ENCODE measurements at regions of chr2 and their contacts with region 1.

Region 1: DNA sequence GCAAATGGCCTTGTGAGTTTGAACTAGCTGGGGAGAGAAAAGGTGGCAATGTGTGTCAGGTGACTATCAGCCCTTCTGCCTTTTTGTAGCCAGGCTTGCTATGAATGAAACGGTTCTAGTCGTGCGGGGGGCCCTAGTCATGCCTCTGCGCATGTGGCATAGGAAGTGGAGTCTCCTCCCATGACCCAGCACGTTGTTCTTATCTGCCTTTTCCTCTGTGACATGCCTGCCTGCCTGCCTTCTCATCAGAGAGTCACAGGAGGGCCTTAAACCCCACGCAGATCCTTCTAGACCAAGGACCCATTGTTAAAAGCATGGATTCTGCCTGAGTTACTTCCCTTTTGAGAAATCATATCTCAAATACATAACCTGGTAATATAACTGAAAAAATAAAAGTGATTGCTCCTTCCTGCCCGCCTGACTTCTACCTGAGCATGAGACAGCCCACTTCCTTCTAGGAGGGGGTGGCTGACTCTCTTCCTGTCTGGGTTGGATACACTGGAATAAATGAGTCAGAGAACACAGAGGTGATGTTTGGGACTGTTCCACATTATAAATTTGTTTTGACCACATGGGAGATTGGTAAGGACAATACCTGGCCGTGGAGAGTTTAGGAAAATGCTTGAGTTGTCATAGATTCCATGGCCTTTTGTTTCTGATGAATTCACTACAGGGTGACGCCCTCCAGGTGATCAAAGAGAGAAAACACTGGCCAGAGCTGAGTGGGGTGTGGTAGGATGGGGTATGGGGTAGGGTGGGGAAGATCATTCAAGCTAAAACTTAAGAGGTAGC is 49.8 kb downstream of the FBLN7 start:
- DNase-seq: peak; percentile 84 to 94 (median 87)
- H3K4me3 ChIP-seq: peak overlapping the region in 1 of 2 donors; percentile 30
- H3K4me3 Mint-ChIP-seq: peak overlapping the region; percentile 51 to 86 (median 74)
- H3K27ac ChIP-seq: peak overlapping the region; percentile 80
- H3K27ac Mint-ChIP-seq: peak overlapping the region; percentile 93 to 100 (median 99)
- H3K4me1 ChIP-seq: peaks cover 91% of the 10 kb centered on the region
- H3K4me1 Mint-ChIP-seq: peaks cover 65 to 92% (median 78%) of the 10 kb centered on the region in 4 donors
- H3K27me3 ChIP-seq: no peaks in the 10 kb centered on the region
- H3K27me3 Mint-ChIP-seq: peaks cover 0 to 1% of the 10 kb centered on the region in 2 donors

Region 2: GRCh38 chr2:111120253-111121027 is 1067.6 kb before region 1 on chr2 and contains the start of gene BCL2L11:
- CTCF ChIA-PET with region 1: no interaction called
- POLR2A ChIA-PET with region 1: no interaction called
- intact Hi-C with region 1: loop called (anchors 10 kb)
- DNase-seq: peak; percentile 85 to 91 (median 87)
- H3K4me3 ChIP-seq: peak within 1 kb of the TSS; percentile 78 to 83
- H3K4me3 Mint-ChIP-seq: peak within 1 kb of the TSS; percentile 88 to 97 (median 94)
- H3K27ac ChIP-seq: peak within 1 kb of the TSS; percentile 32
- H3K27ac Mint-ChIP-seq: peak within 1 kb of the TSS; percentile 82 to 95 (median 89)
- H3K4me1 ChIP-seq: peaks cover 47% of the 10 kb centered on the region
- H3K4me1 Mint-ChIP-seq: peaks cover 21 to 59% (median 37%) of the 10 kb centered on the region in 4 donors
- H3K27me3 ChIP-seq: peaks cover 36% of the 10 kb centered on the region
- H3K27me3 Mint-ChIP-seq: peaks cover 19 to 35% of the 10 kb centered on the region in 2 donors
- total RNA-seq, gene BCL2L11: 33.4 to 34.1 TPM

Region 3: GRCh38 chr2:112121682-112122254 is 66.2 kb before region 1 on chr2:
- CTCF ChIA-PET with region 1: interaction called, 10 read pairs
- POLR2A ChIA-PET with region 1: interaction called, 5 read pairs
- intact Hi-C with region 1: loop called (anchors 5 kb)
- DNase-seq: peak; percentile 46 to 58 (median 52)
- H3K4me3 ChIP-seq: no peak overlapping the region
- H3K4me3 Mint-ChIP-seq: no peak overlapping the region
- H3K27ac ChIP-seq: no peak overlapping the region
- H3K27ac Mint-ChIP-seq: peak overlapping the region in 3 of 7 donors; percentile 16 to 68 (median 38)
- H3K4me1 ChIP-seq: no peaks in the 10 kb centered on the region
- H3K4me1 Mint-ChIP-seq: no peaks in the 10 kb centered on the region
- H3K27me3 ChIP-seq: no peaks in the 10 kb centered on the region
- H3K27me3 Mint-ChIP-seq: no peaks in the 10 kb centered on the region

Region 4: DNA sequence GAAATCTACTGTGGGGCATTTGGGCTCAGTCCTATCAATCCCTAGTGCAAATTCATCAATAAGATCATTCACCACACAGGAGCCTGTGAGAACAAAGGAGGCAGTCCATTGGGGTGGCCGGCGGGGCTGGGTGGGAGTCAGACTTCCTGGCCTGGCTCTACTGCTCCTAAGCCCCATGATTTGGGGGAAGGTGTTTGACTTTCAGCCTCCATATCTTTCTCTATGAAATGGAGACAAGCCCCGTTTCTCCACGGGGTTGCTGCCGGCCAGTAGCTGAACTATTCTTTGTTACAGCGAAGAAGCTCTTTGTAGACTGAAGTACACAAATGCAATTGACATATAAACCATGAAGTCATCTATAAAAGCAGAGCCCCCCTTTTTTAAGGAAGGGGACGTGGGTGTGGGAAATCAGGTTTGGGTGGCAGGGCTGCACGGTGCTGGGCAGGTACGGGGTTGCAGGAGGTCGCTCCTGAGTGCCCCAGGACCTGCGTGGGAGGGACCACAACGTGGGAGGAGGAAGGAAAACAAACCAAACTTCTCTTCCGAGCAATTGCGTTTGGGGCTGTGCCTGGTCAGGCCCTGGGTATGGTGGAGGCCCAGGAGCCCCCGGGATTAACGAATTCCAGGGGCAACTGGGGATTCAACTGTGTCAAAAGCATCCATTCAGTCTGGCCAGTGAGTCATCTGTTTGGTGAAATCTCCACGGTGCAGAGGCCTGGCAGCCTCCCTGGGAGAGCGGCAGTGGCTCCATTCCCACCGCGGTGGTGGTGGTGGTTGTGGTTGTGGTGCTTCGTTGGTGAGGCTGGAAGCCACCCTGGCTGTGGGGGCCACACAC is 31.6 kb before region 1 on chr2:
- CTCF ChIA-PET with region 1: no interaction called
- POLR2A ChIA-PET with region 1: interaction called, 41 read pairs
- intact Hi-C with region 1: loop called (anchors 1 kb)
- DNase-seq: peak in 2 of 5 donors; percentile 21 to 51
- H3K4me3 ChIP-seq: peak overlapping the region; percentile 23 to 53
- H3K4me3 Mint-ChIP-seq: peak overlapping the region; percentile 78 to 89 (median 82)
- H3K27ac ChIP-seq: peak overlapping the region; percentile 16
- H3K27ac Mint-ChIP-seq: peak overlapping the region; percentile 82 to 95 (median 89)
- H3K4me1 ChIP-seq: peaks cover 28% of the 10 kb centered on the region
- H3K4me1 Mint-ChIP-seq: peaks cover 23 to 37% (median 31%) of the 10 kb centered on the region in 4 donors
- H3K27me3 ChIP-seq: no peaks in the 10 kb centered on the region
- H3K27me3 Mint-ChIP-seq: no peaks in the 10 kb centered on the region

Region 5: GRCh38 chr2:112230371-112230770 is 42.4 kb after region 1 on chr2:
- CTCF ChIA-PET with region 1: interaction called, 4 read pairs
- POLR2A ChIA-PET with region 1: interaction called, 3 read pairs
- intact Hi-C with region 1: loop called (anchors 5 kb)
- DNase-seq: no peak
- H3K4me3 ChIP-seq: no peak overlapping the region
- H3K4me3 Mint-ChIP-seq: no peak overlapping the region
- H3K27ac ChIP-seq: no peak overlapping the region
- H3K27ac Mint-ChIP-seq: no peak overlapping the region
- H3K4me1 ChIP-seq: no peaks in the 10 kb centered on the region
- H3K4me1 Mint-ChIP-seq: peaks cover 0 to 5% (median 3%) of the 10 kb centered on the region in 4 donors
- H3K27me3 ChIP-seq: no peaks in the 10 kb centered on the region
- H3K27me3 Mint-ChIP-seq: no peaks in the 10 kb centered on the region

Region 6: DNA sequence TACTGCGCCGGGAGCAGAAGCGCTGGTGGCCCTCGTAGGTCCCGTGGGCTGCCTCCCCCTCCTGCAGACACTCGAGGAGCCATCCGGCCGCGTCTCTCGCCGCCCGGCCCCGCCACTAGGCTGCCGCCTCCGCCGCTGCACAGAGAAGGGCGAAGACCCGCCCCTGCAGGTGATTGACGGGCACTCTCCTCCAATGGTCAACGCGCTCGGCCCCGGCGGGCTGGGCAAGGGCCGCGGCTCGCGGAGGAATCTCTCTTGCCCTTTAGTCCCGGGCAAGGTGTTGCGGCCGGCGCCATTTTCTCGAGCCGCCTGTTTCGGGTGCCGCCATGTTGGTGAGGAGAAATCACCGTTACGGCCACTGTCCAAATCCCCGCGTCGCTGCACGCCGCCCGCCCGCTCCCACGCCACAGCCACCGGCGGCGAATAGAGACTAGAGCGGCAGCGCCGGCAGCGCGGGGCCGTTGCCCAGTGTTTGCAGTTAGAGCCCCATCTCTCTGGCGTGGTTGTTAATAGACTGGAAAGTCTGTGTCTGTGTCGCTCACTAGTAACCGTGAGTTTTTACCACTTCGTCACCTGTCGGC is 87.4 kb after region 1 on chr2 and contains the start of gene ZC3H6:
- CTCF ChIA-PET with region 1: interaction called, 3 read pairs
- POLR2A ChIA-PET with region 1: interaction called, 6 read pairs
- intact Hi-C with region 1: loop called (anchors 1 kb)
- DNase-seq: peak; percentile 97 to 100 (median 99)
- H3K4me3 ChIP-seq: peak within 1 kb of the TSS; percentile 90 to 97
- H3K4me3 Mint-ChIP-seq: peak within 1 kb of the TSS; percentile 91 to 97 (median 94)
- H3K27ac ChIP-seq: peak within 1 kb of the TSS; percentile 100
- H3K27ac Mint-ChIP-seq: peak within 1 kb of the TSS; percentile 97 to 100 (median 99)
- H3K4me1 ChIP-seq: peaks cover 28% of the 10 kb centered on the region
- H3K4me1 Mint-ChIP-seq: peaks cover 11 to 46% (median 19%) of the 10 kb centered on the region in 4 donors
- H3K27me3 ChIP-seq: no peaks in the 10 kb centered on the region
- H3K27me3 Mint-ChIP-seq: no peaks in the 10 kb centered on the region
- total RNA-seq, gene ZC3H6: 36.8 to 43.2 TPM

Region 7: DNA sequence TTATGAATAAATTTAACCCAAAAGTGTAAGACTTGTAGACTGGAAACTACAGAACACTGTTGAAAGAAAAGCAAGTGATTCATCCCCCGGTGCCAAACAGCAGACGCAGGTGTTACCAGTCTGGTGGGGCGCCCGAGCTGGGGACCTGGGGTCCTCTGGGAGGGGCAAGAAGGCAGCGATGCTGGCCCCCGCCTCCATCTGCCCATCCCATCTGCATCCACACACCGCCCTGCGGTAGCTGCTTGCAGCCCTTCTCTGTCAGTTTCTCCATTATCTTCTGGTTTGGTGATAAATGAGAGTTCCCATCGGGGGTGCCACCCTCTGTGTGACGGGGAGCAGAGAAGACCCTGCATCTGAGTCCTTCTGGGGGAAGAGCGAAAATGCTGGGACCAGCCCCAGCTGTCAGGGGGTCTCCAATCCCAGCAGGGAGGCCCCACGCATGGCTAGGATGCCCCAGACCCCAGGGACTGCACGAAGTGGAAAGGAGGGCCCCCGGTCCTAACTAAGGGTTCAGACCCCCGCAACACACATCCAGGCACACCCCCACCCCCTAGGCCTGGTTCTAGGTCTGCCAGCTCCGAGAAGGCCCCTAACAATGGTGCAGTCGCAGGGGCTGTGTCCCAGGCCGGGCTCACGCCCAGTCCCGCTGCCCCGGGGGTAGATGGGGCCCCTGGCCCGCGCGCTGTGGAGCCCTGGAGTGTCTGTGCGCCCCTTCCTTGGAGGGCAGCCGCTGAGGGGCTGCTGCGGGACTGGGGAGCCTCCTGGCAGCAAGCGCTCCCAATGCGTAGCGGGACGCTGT is 246.1 kb after region 1 on chr2:
- CTCF ChIA-PET with region 1: no interaction called
- POLR2A ChIA-PET with region 1: no interaction called
- intact Hi-C with region 1: loop called (anchors 5 kb)
- DNase-seq: peak in 1 of 5 donors; percentile 9
- H3K4me3 ChIP-seq: no peak overlapping the region
- H3K4me3 Mint-ChIP-seq: peak overlapping the region in 1 of 8 donors; percentile 16
- H3K27ac ChIP-seq: no peak overlapping the region
- H3K27ac Mint-ChIP-seq: peak overlapping the region in 2 of 7 donors; percentile 27 to 35
- H3K4me1 ChIP-seq: peaks cover 9% of the 10 kb centered on the region
- H3K4me1 Mint-ChIP-seq: peaks cover 6 to 29% (median 15%) of the 10 kb centered on the region in 4 donors
- H3K27me3 ChIP-seq: no peaks in the 10 kb centered on the region
- H3K27me3 Mint-ChIP-seq: peaks cover 5 to 9% of the 10 kb centered on the region in 2 donors